Activated CD8-positive, alpha-beta T cell treated with anti-CD3 and anti-CD28 coated beads, Interleukin-2, amount 10 ng/mL, durations not matched to agents 7 days and 5 days (primary cell): ENCODE measurements at regions of chr11 and their contacts with region 1.

Region 1: DNA sequence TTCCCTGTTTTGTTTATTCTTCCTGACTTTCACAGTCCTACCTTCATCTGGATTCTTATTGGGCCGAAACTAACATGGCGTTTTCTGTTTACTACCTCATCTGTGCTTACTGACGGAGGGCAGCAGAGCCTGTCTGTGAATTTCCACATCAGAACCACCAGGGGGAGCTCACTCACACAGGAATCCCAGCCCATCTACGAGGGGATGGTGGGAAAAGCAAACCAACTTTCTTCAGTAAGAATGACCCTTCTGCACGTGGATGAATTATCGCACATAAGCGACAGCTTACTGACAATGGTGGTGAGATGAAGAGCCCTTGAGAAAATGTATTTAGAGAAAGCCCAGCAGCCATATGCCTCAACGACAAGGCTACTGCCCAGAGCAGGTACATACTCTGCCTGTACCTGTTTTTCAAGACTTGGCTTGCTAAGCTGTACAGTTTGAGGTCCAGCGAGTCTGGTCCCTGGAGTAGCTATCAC is 42.5 kb downstream of the LARGE2 start:
- DNase-seq: peak; percentile 69
- ATAC-seq: peak; percentile 91
- H3K4me3 Mint-ChIP-seq: no peak overlapping the region
- H3K27ac Mint-ChIP-seq: no peak overlapping the region
- H3K4me1 Mint-ChIP-seq: no peaks in the 10 kb centered on the region
- H3K27me3 Mint-ChIP-seq: no peaks in the 10 kb centered on the region

Region 2: GRCh38 chr11:45879803-45880686 is 84.9 kb before region 1 on chr11:
- CTCF ChIA-PET with region 1: no interaction called
- POLR2A ChIA-PET with region 1: no interaction called
- DNase-seq: no peak
- ATAC-seq: no peak
- H3K4me3 Mint-ChIP-seq: no peak overlapping the region
- H3K27ac Mint-ChIP-seq: no peak overlapping the region
- H3K4me1 Mint-ChIP-seq: peaks cover under 1% of the 10 kb centered on the region
- H3K27me3 Mint-ChIP-seq: no peaks in the 10 kb centered on the region

Region 3: DNA sequence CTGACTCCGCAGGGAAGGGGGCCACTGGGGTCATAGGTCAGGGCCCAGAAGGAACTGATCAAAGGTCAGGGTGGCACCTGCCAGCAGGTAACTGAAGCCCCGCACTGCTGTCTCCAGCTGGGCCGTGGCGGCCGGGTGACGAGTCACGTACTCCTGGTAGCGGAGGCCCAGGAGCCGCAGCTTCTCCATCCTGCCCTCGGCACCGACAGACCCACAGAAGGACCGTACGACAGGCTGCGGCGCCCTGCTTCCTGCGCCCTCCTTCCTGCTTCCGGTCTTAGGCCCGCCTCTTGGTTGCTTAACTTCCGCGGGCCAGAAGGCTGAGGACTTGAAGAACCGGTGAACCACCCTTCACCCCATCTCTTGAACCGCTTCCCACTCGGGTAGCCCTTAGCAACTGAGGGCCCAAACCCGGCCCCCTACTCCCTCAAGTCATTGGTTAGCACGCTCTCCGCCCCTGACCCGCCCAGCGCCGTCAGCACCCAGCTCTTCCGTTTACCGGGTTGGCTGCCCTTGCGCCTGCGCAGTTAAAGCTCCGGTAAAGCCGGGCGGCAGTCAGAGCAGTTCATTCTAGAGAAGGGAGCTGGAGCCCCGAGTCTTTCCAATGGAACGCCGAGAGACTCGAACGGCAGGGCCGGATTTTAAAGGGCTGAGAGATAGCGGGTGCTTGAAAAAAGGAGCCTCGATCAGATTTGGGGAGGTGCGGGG is 47.2 kb before region 1 on chr11 and contains the start of gene PEX16:
- CTCF ChIA-PET with region 1: interaction called, 13 read pairs
- POLR2A ChIA-PET with region 1: no interaction called
- DNase-seq: peak; percentile 98
- ATAC-seq: peak; percentile 94
- H3K4me3 Mint-ChIP-seq: peak within 1 kb of the TSS; percentile 94
- H3K27ac Mint-ChIP-seq: peak within 1 kb of the TSS; percentile 99
- H3K4me1 Mint-ChIP-seq: peaks cover 50% of the 10 kb centered on the region
- H3K27me3 Mint-ChIP-seq: peaks cover 6% of the 10 kb centered on the region
- total RNA-seq, gene PEX16: 50.0 to 54.6 TPM

Region 4: DNA sequence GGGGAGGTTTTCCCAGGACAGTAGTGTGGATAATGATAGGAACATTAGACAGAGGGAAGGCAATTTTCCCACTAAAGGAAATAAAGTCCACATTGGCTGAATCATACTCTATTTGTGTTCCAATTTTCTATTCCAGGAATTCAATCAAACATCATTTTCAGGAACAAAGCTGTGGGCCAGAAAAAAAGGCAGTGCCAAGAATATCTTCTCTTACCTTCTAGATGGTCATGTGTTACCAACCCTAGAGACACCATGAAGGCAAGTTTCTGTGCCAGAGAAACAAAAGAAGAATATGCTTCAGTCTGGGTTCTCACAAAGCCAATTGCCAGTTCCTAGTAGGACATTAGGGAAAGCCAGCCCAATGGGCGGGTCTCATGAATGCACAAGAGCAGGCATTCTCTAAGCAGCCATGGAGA is 14.9 kb before region 1 on chr11:
- CTCF ChIA-PET with region 1: interaction called, 58 read pairs
- POLR2A ChIA-PET with region 1: no interaction called
- DNase-seq: no peak
- ATAC-seq: no peak
- H3K4me3 Mint-ChIP-seq: no peak overlapping the region
- H3K27ac Mint-ChIP-seq: no peak overlapping the region
- H3K4me1 Mint-ChIP-seq: no peaks in the 10 kb centered on the region
- H3K27me3 Mint-ChIP-seq: no peaks in the 10 kb centered on the region

Region 5: GRCh38 chr11:45993531-45994001 is 28.6 kb after region 1 on chr11:
- CTCF ChIA-PET with region 1: interaction called, 17 read pairs
- POLR2A ChIA-PET with region 1: no interaction called
- DNase-seq: no peak
- ATAC-seq: no peak
- H3K4me3 Mint-ChIP-seq: no peak overlapping the region
- H3K27ac Mint-ChIP-seq: no peak overlapping the region
- H3K4me1 Mint-ChIP-seq: no peaks in the 10 kb centered on the region
- H3K27me3 Mint-ChIP-seq: no peaks in the 10 kb centered on the region

Region 6: DNA sequence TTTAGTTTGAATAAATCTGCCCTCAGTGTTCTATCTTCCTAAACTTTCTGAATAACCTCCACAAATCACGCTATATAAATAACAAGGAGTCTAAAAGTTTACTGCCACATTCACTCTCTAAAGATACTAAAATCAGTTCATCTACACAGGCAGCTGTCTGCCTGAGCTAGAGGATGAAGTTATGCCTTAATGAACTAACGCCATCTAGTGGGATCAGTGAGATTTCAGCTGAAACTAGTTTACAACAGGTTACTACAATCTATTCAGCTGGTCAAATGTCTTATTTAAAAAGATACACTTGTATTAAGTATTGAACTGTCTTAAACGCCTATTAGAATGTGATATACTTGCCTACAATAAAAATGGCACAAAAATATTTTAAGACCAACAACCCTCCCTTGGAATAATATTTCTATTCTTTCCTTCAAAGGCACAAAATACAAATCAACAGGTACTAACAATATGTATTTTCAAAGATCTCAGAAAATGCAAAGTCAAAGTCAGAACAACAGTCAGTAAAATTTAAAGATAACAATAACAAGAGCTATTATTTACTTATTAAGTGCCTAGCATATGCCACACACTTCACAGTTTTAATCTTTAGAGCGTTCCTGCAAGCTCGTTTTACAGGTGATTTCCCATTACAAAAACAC is 41.6 kb after region 1 on chr11:
- CTCF ChIA-PET with region 1: interaction called, 83 read pairs
- POLR2A ChIA-PET with region 1: no interaction called
- DNase-seq: peak; percentile 57
- ATAC-seq: peak; percentile 76
- H3K4me3 Mint-ChIP-seq: no peak overlapping the region
- H3K27ac Mint-ChIP-seq: no peak overlapping the region
- H3K4me1 Mint-ChIP-seq: no peaks in the 10 kb centered on the region
- H3K27me3 Mint-ChIP-seq: no peaks in the 10 kb centered on the region

Region 7: GRCh38 chr11:46100670-46101069 is 135.7 kb after region 1 on chr11:
- CTCF ChIA-PET with region 1: interaction called, 26 read pairs
- POLR2A ChIA-PET with region 1: no interaction called
- DNase-seq: no peak
- ATAC-seq: peak; percentile 67
- H3K4me3 Mint-ChIP-seq: peak overlapping the region; percentile 71
- H3K27ac Mint-ChIP-seq: peak overlapping the region; percentile 76
- H3K4me1 Mint-ChIP-seq: peaks cover 28% of the 10 kb centered on the region
- H3K27me3 Mint-ChIP-seq: no peaks in the 10 kb centered on the region

Region 8: GRCh38 chr11:46308631-46309419 is 343.9 kb after region 1 on chr11:
- CTCF ChIA-PET with region 1: interaction called, 29 read pairs
- POLR2A ChIA-PET with region 1: no interaction called
- DNase-seq: peak; percentile 75
- ATAC-seq: peak; percentile 78
- H3K4me3 Mint-ChIP-seq: no peak overlapping the region
- H3K27ac Mint-ChIP-seq: no peak overlapping the region
- H3K4me1 Mint-ChIP-seq: peaks cover 16% of the 10 kb centered on the region
- H3K27me3 Mint-ChIP-seq: peaks cover 3% of the 10 kb centered on the region